ENCODE measurements at regions of chr6 and their contacts with region 1.

Region 1: DNA sequence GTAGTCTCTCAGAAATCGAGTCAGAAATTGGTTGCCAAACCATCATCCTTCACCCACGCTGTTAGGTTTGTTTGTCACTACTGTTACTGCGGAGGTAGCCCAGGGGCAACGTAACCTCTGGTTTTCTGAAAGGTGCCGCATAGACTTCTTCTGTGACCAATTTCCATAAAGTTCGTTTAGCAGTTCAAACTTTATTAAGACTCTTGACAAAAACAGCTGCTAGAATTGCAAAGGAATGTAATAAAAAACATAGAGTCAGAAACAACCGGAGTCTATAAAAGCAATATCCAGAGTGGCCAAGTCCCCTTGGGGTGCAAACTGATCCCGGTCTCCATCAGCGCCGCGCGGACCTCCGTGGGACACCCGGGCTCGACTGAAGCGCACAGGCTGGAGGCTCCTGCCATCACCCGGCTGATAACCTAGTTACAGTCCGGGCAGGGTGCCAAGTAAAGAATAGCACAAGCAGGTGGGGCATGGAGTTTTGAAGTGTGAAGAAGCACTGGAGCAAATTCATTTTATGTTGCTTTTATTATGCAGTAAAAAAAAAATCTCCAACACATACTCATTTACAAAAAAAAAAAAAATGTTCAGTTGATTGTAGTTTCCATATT is 205.0 kb upstream of the GMDS start:
- DNase-seq: no peak

Region 2: GRCh38 chr6:2634139-2634964 is 183.9 kb after region 1 on chr6:
- intact Hi-C with region 1: loop called in 1 of 2 experiments (anchors 10 kb)
- DNase-seq: peak; percentile 97